Adrenal gland (tissue), 19 donors: ENCODE measurements at regions of chr17 and their contacts with region 1.

Region 1: DNA sequence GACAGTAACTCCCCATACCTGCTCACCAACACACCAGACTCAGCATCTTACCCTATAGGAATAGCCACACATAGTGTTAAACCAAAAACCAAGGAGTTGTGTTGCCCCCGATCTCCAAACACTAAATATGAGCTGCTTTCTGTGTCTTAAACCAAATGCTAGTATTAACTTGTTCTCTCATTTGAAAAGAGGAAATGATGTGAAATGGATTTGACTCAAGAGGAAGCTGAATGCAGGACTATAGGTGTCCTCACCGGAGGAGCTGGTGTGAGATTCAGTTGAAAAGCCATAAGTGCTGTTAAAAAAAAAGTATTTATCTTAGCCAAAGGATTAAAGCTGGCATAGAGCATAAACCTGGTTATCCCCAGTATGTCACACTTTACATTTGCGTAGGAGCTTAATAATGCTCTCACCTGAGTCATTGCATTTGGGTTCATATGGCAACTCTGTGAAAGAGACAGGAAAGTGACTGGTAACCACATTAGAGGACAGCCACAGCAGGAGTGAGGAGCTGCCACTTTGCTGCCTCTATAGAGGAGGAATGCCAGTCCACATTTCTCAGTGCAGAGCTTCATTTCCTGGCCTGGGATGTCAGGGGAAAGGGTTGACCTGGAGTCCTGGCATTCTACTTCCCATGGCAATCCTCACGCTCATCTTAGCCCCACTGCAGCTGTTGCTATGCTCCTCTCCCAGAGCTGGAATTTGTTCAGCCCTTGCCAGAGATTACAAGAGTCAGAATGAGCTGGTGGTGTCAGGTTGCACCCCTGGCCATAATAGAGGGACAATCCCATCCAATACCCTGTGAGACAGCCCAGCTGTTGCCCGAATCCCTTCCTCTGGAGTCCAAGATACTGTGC is 143.3 kb upstream of the ANKFN1 start:
- DNase-seq: no peak
- H3K4me3 ChIP-seq: no peak overlapping the region
- H3K27ac ChIP-seq: no peak overlapping the region
- H3K4me1 ChIP-seq: no peaks in the 10 kb centered on the region
- H3K27me3 ChIP-seq: no peaks in the 10 kb centered on the region
- CTCF ChIP-seq: no peak
- POLR2A ChIP-seq: no peak

Region 2: DNA sequence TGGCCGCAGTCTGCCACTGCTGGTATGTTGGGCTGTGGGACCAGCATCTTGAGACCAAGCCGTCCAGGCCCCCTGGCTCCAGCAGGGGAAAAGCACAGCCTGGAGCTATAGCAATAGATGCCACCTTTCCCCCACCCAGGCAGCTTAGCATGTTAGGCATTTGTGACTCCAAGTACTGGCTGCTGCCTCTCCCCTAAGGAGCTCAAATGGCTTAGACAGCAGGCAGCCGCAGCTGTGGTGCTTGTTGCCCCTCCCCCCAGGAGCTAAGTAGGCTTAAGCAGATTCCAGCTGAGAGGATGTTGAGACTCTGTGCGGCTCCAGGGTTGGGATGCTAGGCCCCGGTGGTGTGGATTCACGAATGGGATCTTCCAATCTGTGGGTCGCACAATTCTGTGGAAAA is 54.5 kb after region 1 on chr17:
- intact Hi-C with region 1: loop called in 1 of 2 experiments (anchors 10 kb)
- DNase-seq: no peak
- H3K4me3 ChIP-seq: no peak overlapping the region
- H3K27ac ChIP-seq: no peak overlapping the region
- H3K4me1 ChIP-seq: no peaks in the 10 kb centered on the region
- H3K27me3 ChIP-seq: no peaks in the 10 kb centered on the region
- CTCF ChIP-seq: no peak
- POLR2A ChIP-seq: no peak